ENCODE measurements at regions of chr17 and their contacts with region 1.

Region 1: DNA sequence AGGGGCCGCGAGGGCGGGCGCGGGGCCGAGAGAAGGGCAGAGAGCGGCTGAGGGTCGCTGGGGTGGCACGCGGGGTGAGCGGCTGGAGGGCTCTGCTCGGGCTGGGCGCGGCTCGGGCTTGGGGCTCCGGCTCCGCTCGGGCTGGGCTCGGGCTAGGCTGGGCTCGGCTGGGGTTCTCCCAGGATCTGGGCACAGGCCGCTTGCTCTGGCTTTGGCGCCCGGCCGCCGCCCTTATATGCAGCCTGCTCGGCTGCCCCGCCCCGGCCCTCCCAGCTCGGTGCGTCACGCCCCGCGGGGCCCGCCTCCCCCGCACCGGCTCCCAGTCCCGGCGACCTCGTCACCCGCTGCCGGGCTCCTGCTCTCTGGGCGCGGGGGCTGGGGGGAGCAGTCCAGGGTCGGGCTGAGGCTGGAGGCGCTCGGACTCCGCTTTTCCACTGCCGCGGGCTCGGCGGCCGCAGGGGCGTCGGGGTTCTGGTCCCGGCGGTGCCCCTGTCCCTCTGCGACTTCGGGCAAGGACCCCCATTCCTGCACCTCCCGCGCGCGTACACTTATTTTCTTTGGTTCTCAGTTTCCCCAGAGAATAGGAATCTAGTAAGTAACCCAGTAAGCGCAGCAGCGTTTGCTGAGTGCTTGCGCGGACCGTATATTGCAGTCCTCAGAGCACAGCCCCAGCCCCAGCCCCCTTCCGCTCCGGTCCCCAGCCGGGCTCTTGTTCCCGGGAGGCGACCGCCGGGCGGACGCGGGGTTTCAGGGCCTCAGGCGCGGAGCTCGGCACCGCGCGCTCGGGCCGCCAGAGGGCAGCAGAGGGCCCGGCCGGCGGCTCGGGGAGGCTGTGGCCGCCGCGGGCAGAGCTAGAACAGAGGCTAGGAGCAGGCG is at the start of gene RASD1:
- DNase-seq: peak; percentile 82
- ATAC-seq: peak; percentile 75
- H3K4me3 Mint-ChIP-seq: peak within 1 kb of the TSS; percentile 81
- H3K27ac Mint-ChIP-seq: no peak within 1 kb of the TSS
- H3K4me1 Mint-ChIP-seq: peaks cover 41% of the 10 kb centered on the region
- H3K27me3 Mint-ChIP-seq: peaks cover 29% of the 10 kb centered on the region
- CTCF ChIP-seq: peak; percentile 95
- total RNA-seq, gene RASD1: 5.1 to 5.3 TPM (median 5.2 TPM) in 3 replicates

Region 2: DNA sequence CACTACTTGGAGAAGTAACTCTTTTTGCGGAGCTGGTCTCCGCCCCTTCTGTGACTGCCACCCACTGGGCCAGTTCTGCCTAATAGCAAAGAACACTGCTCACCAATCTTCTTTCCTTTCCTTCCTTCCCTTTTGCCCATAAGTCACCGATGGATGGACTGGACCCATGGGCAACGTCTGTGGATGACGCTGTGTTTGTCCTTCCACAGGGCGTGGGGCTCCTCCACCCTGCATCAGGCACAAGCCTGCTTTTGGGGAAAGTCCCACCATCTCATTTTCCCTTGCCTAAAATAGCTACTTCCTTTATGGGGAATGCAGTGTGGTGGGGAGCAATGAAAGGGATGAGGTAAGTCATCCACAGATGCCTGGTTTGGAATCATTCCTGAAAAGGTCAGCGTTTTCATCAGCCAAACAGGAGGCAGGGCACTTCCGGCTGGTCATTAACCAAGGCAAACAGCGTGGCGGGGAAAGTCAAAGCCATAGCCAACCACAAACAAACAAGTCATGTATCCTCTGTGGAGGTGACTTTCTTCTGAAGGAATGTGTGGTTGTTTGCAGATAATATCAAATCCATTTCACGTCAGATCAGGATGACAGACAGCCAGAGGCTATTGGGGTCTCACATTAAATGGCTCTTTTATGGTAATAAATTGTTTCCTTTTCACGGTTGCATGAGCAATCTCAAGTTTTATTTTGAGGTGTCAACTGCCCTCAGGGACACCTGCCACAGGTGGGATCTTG is 50.3 kb before region 1 on chr17:
- CTCF ChIA-PET with region 1: interaction called, 12 read pairs
- POLR2A ChIA-PET with region 1: no interaction called
- DNase-seq: no peak
- ATAC-seq: no peak
- H3K4me3 Mint-ChIP-seq: no peak overlapping the region
- H3K27ac Mint-ChIP-seq: peak overlapping the region; percentile 46; the same call in 1 of the 2 replicates
- H3K4me1 Mint-ChIP-seq: peaks cover 17% of the 10 kb centered on the region
- H3K27me3 Mint-ChIP-seq: peaks cover 17% of the 10 kb centered on the region
- CTCF ChIP-seq: no peak

Region 3: DNA sequence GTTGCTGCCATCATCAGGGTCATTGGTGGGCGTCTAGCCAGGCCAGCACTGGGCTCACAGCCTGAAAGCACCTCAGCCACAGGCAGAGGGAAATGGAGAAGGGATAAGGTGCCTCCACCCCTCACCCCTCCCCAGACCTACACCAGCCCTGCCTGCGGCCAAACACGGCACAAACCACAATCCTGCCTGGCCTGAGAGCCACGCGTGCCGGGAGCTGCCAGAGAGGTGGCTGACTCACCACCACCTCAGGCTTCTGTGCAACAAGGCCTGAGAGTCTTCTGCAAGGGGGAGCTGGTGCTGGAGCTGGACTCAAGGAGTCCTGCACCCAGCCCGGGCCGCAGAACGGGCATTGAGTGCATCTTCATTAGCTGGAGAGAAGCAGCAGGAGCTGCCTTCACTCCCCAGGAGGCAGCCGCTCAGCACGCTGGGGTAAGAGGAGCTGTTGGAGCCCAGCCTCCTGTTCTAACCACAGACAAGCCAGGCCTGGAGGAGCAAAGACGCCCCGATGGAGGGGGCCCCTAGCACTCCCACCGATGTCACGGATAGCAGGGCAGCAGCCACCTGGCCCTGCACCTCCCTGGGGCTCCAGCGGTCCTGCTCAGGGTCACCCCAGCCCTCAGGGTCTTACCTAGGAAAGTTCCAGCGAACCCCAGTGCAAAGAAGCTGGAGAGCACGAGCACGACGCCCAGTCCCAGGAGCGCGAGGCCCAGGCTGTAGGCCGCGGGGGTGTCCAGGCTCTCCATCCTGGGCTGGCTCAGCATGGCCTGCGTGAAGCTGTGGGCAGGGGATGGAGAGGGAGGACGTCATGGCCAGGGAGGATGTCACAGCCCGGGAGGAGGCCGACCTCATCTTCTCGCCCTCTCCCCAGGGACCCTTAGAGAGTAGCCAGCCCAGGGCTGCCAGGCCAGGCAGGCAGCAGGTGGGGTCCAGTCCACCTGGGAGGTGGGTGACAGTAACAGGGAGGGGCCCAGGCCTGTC is 15.7 kb after region 1 on chr17:
- CTCF ChIA-PET with region 1: interaction called, 46 read pairs
- POLR2A ChIA-PET with region 1: interaction called, 6 read pairs
- DNase-seq: no peak
- ATAC-seq: no peak
- H3K4me3 Mint-ChIP-seq: no peak overlapping the region
- H3K27ac Mint-ChIP-seq: no peak overlapping the region
- H3K4me1 Mint-ChIP-seq: peaks cover 25% of the 10 kb centered on the region
- H3K27me3 Mint-ChIP-seq: no peaks in the 10 kb centered on the region
- CTCF ChIP-seq: no peak

Region 4: GRCh38 chr17:17561408-17562145 is 65.2 kb after region 1 on chr17:
- CTCF ChIA-PET with region 1: interaction called, 38 read pairs
- POLR2A ChIA-PET with region 1: interaction called, 5 read pairs
- DNase-seq: no peak
- ATAC-seq: no peak
- H3K4me3 Mint-ChIP-seq: no peak overlapping the region
- H3K27ac Mint-ChIP-seq: peak overlapping the region; percentile 57; the same call in 1 of the 2 replicates
- H3K4me1 Mint-ChIP-seq: peaks cover 13% of the 10 kb centered on the region
- H3K27me3 Mint-ChIP-seq: no peaks in the 10 kb centered on the region
- CTCF ChIP-seq: no peak

Region 5: GRCh38 chr17:17613708-17614114 is 117.3 kb after region 1 on chr17:
- CTCF ChIA-PET with region 1: interaction called, 36 read pairs
- POLR2A ChIA-PET with region 1: interaction called, 3 read pairs
- DNase-seq: peak; percentile 75
- ATAC-seq: peak; percentile 92
- H3K4me3 Mint-ChIP-seq: no peak overlapping the region
- H3K27ac Mint-ChIP-seq: no peak overlapping the region; the same call in 1 of the 2 replicates
- H3K4me1 Mint-ChIP-seq: peaks cover 26% of the 10 kb centered on the region
- H3K27me3 Mint-ChIP-seq: no peaks in the 10 kb centered on the region
- CTCF ChIP-seq: peak; percentile 43; the same call in 1 of the 2 replicates

Region 6: GRCh38 chr17:17919169-17920107 is 423.0 kb after region 1 on chr17:
- CTCF ChIA-PET with region 1: interaction called, 13 read pairs
- POLR2A ChIA-PET with region 1: no interaction called
- DNase-seq: peak; percentile 81
- ATAC-seq: peak; percentile 71
- H3K4me3 Mint-ChIP-seq: no peak overlapping the region
- H3K27ac Mint-ChIP-seq: peak overlapping the region; percentile 44; the same call in 1 of the 2 replicates
- H3K4me1 Mint-ChIP-seq: peaks cover 32% of the 10 kb centered on the region
- H3K27me3 Mint-ChIP-seq: no peaks in the 10 kb centered on the region
- CTCF ChIP-seq: peak; percentile 45

Measured in WTC11 (cell line).